Mammary epithelial cell (primary cell): ENCODE measurements at regions of chr2 and their contacts with region 1.

Region 1: GRCh38 chr2:37414470-37414949 is 70.1 kb downstream of the QPCT start:
- DNase-seq: peak; percentile 52
- H3K4me3 ChIP-seq: no peak overlapping the region
- H3K27ac ChIP-seq: no peak overlapping the region
- H3K4me1 ChIP-seq: no peaks in the 10 kb centered on the region
- H3K27me3 ChIP-seq: no peaks in the 10 kb centered on the region
- CTCF ChIP-seq: peak; percentile 93 to 95

Region 2: GRCh38 chr2:36245651-36246050 is 1168.9 kb before region 1 on chr2:
- CTCF ChIA-PET with region 1: no interaction called
- dilution Hi-C with region 1: no loop called
- in situ Hi-C with region 1: no loop called
- intact Hi-C with region 1: no loop called
- DNase-seq: no peak
- H3K4me3 ChIP-seq: no peak overlapping the region
- H3K27ac ChIP-seq: no peak overlapping the region
- H3K4me1 ChIP-seq: peaks cover 9% of the 10 kb centered on the region
- H3K27me3 ChIP-seq: no peaks in the 10 kb centered on the region
- CTCF ChIP-seq: no peak

Region 3: GRCh38 chr2:37635504-37636380 is 221.2 kb after region 1 on chr2:
- CTCF ChIA-PET with region 1: no interaction called
- dilution Hi-C with region 1: no loop called
- in situ Hi-C with region 1: no loop called
- intact Hi-C with region 1: loop called (anchors 1 kb)
- DNase-seq: peak; percentile 98
- H3K4me3 ChIP-seq: no peak overlapping the region
- H3K27ac ChIP-seq: peak overlapping the region; percentile 67
- H3K4me1 ChIP-seq: peaks cover 15% of the 10 kb centered on the region
- H3K27me3 ChIP-seq: no peaks in the 10 kb centered on the region
- CTCF ChIP-seq: no peak

Region 4: GRCh38 chr2:37672104-37672869 is 257.8 kb after region 1 on chr2:
- CTCF ChIA-PET with region 1: interaction called, 6 read pairs
- dilution Hi-C with region 1: no loop called
- in situ Hi-C with region 1: no loop called
- intact Hi-C with region 1: loop called (anchors 1 kb)
- DNase-seq: peak; percentile 90
- H3K4me3 ChIP-seq: peak overlapping the region; percentile 88 to 96 (median 93)
- H3K27ac ChIP-seq: peak overlapping the region; percentile 65
- H3K4me1 ChIP-seq: peaks cover 44% of the 10 kb centered on the region
- H3K27me3 ChIP-seq: no peaks in the 10 kb centered on the region
- CTCF ChIP-seq: no peak

Region 5: GRCh38 chr2:37786854-37787253 is 372.3 kb after region 1 on chr2:
- CTCF ChIA-PET with region 1: interaction called, 17 read pairs
- dilution Hi-C with region 1: no loop called
- in situ Hi-C with region 1: no loop called
- intact Hi-C with region 1: no loop called
- DNase-seq: peak; percentile 95
- H3K4me3 ChIP-seq: no peak overlapping the region
- H3K27ac ChIP-seq: peak overlapping the region; percentile 31
- H3K4me1 ChIP-seq: peaks cover 33% of the 10 kb centered on the region
- H3K27me3 ChIP-seq: no peaks in the 10 kb centered on the region
- CTCF ChIP-seq: no peak

Region 6: DNA sequence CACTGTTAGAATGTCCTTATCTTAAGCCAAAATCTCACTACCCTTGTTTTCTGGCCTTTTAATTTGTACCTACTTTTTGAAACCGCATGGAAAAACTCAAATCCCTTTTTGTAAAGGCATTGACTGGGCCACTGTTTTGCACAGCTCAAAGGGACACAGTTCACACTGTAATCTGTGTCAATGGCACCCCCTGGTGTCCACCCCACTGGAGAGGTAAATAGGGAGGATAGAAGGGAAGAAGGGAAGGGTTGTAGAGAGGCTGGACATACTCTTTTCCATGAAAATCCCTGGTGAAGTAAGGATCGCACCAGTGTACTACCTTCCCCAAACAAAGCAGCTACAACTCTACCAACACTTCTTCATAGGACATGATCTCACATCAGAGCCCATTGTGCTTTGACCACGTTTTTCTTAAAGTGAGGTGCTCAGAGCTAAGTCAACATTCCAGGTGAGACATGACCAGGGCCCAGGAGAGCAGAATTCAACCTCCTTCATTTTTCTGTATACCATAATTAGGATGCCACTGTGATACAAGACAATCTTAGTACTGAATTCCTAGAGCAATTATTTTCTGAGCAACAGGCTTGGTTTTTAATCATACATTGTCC is 418.2 kb after region 1 on chr2:
- CTCF ChIA-PET with region 1: interaction called, 17 read pairs
- dilution Hi-C with region 1: loop called (anchors 25 kb)
- in situ Hi-C with region 1: loop called (anchors 5 kb)
- intact Hi-C with region 1: loop called (anchors 1 kb)
- DNase-seq: peak; percentile 73
- H3K4me3 ChIP-seq: no peak overlapping the region
- H3K27ac ChIP-seq: no peak overlapping the region
- H3K4me1 ChIP-seq: no peaks in the 10 kb centered on the region
- H3K27me3 ChIP-seq: no peaks in the 10 kb centered on the region
- CTCF ChIP-seq: peak; percentile 75 to 87

Region 7: GRCh38 chr2:37890893-37891495 is 476.5 kb after region 1 on chr2:
- CTCF ChIA-PET with region 1: no interaction called
- dilution Hi-C with region 1: no loop called
- in situ Hi-C with region 1: loop called in 1 of 2 experiments (anchors 10 kb)
- intact Hi-C with region 1: loop called (anchors 5 kb)
- DNase-seq: peak; percentile 40
- H3K4me3 ChIP-seq: no peak overlapping the region
- H3K27ac ChIP-seq: no peak overlapping the region
- H3K4me1 ChIP-seq: peaks cover 16% of the 10 kb centered on the region
- H3K27me3 ChIP-seq: no peaks in the 10 kb centered on the region
- CTCF ChIP-seq: peak; percentile 67 to 82

Region 8: DNA sequence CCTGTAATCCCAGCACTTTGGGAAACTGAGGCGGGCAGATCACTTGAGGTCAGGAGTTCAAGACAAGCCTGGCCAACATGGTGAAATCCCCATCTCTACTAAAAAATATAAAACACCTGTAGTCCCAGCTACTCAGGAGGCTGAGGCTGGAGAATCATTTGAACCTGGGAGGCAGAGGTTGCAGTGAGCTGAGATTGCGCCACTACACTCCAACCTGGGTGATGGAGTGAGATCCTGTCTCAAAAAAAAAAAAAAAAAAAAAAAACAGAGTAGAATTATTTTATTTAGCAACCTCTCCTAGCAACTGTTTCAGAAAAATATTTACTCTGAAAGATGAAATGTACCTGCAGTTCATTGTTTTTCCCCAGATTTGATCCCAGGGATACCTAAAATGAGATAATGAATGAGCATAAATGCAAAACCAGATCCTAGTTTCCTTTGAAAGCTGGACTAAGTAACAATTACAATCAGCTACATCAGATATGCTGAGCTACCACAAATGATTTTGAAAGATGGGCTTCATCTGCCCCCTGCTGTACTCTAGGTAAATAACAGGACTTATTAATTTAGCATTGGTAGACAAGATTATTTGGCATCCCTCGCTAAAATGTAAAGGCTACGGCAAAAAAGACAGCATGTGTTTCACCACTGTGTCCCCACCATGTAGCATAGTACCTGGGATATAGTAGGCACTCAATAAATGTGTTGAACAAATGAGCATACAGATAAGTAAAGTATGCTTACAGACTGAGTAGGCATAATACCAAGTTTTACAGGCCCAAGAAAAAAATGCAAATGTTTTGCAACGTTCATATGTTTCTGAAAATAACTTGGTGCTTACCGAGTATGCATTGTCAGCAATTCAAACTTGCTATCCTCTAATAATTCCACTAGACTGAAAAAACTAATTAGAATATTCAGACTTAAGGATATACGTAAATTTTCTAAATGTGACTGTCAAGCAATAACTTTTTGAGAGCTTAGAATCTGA is 860.1 kb after region 1 on chr2:
- CTCF ChIA-PET with region 1: no interaction called
- dilution Hi-C with region 1: no loop called
- in situ Hi-C with region 1: no loop called
- intact Hi-C with region 1: loop called (anchors 2 kb)
- DNase-seq: peak; percentile 58
- H3K4me3 ChIP-seq: no peak overlapping the region
- H3K27ac ChIP-seq: no peak overlapping the region
- H3K4me1 ChIP-seq: no peaks in the 10 kb centered on the region
- H3K27me3 ChIP-seq: no peaks in the 10 kb centered on the region
- CTCF ChIP-seq: peak; percentile 56 to 65